HCT116 (cell line): ENCODE measurements at regions of chr7 and their contacts with region 1.

Region 1: DNA sequence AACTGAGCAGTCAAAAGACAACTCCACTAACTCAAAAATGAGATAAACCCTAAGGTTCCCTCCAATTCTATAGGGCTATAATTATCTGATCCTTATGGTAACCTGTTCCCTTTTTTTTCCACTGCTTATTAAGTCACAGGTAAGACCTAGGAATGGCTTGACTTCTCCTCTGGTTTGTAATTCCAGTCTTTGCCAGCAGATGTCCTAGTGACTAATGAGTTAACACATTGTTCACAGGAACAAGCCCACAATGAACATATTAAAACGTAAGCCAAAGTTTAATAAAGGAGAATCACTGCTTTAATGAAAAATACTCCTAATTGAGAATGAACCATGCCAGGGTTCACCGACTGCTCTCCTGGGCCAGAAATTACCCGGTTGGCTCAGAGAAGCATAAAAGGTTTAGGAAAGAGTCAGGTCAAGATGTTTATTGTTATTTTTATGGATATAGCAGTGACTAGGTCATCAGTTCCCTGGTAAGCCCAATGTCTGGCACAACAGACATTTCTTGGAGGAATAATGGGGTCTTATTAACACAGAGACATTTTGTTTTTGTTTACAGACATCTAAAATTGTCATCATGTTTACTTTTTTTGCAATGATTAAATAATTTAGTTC is 120.1 kb downstream of the ELAPOR2 start:
- DNase-seq: peak; percentile 68
- ATAC-seq: peak; percentile 96
- H3K4me3 ChIP-seq: no peak overlapping the region
- H3K27ac ChIP-seq: no peak overlapping the region
- H3K4me1 ChIP-seq: no peaks in the 10 kb centered on the region
- H3K27me3 ChIP-seq: no peaks in the 10 kb centered on the region
- CTCF ChIP-seq: peak; percentile 62 to 73 (median 71)
- POLR2A ChIP-seq: no peak
- RAD21 ChIP-seq: peak; percentile 71

Region 2: DNA sequence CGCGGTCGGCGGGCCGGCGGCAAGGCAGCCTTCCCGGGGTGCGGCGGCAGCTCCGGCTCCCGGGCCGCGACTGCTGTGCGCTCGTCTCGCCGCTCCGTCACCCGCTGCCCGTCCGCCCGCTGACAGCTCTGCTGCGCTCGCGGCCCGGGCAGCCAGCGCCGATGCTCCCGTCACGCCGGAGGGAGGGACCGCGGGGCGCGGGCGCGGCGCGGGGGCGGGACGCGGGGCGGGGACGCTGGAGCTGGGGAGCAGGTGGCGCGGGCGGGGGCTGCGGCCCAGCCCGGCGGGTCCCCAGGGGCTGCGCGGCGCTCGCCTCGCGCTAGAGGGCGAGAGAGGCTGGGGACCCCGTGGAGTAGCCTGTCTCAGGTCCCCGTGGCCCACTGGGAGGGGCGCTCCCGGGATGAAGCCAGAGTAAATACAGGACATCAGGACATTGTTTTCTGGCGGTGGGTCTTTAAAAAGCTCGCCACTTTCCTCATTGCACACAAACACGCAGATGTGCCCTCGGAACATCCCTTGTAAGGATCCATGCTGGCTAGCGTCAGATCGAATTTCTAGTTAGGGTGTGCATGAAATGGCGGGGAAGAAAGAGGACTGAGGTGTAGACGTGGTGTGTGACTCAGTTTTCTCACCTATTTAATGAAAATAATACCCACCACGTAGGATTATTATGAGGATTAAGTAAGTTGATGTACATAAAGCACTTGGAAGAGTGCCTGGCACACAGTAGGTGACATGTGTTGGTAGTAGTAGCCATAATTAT is 120.4 kb after region 1 on chr7 and contains the start of gene ELAPOR2:
- CTCF ChIA-PET with region 1: no interaction called
- POLR2A ChIA-PET with region 1: no interaction called
- RAD21 ChIA-PET with region 1: no interaction called
- intact Hi-C with region 1: loop called (anchors 5 kb)
- DNase-seq: peak; percentile 36
- ATAC-seq: peak; percentile 95
- H3K4me3 ChIP-seq: peak within 1 kb of the TSS; percentile 60 to 72
- H3K27ac ChIP-seq: peak within 1 kb of the TSS; percentile 57
- H3K4me1 ChIP-seq: peaks cover 6 to 15% of the 10 kb centered on the region in 2 experiments; a peak in 3 of 4 replicates
- H3K27me3 ChIP-seq: no peaks in the 10 kb centered on the region
- CTCF ChIP-seq: peak in 2 of 3 experiments; percentile 35 to 42; a peak in 3 of 6 replicates
- POLR2A ChIP-seq: peak; percentile 40
- RAD21 ChIP-seq: peak; percentile 44
- total RNA-seq, gene ELAPOR2: 26.0 TPM